ENCODE measurements at regions of chr2 and their contacts with region 1.

Region 1: GRCh38 chr2:58046585-58047372 is at the start of gene VRK2:
- DNase-seq: peak; percentile 93 to 97
- H3K4me3 ChIP-seq: peak within 1 kb of the TSS; percentile 65
- H3K27ac ChIP-seq: peak within 1 kb of the TSS; percentile 81
- H3K4me1 ChIP-seq: peaks cover 41% of the 10 kb centered on the region
- H3K27me3 ChIP-seq: no peaks in the 10 kb centered on the region
- CTCF ChIP-seq: 0 out of 2 replicates have a peak, but pooled peaks have one; percentile 9
- total RNA-seq, gene VRK2: 32.7 and 42.8 TPM in 2 replicates

Region 2: GRCh38 chr2:57740891-57741290 is 305.9 kb before region 1 on chr2:
- CTCF ChIA-PET with region 1: no interaction called
- POLR2A ChIA-PET with region 1: no interaction called
- intact Hi-C with region 1: no loop called
- DNase-seq: no peak
- H3K4me3 ChIP-seq: no peak overlapping the region
- H3K27ac ChIP-seq: no peak overlapping the region
- H3K4me1 ChIP-seq: no peaks in the 10 kb centered on the region
- H3K27me3 ChIP-seq: no peaks in the 10 kb centered on the region
- CTCF ChIP-seq: no peak

Region 3: GRCh38 chr2:57981083-57981768 is 65.6 kb before region 1 on chr2:
- CTCF ChIA-PET with region 1: no interaction called
- POLR2A ChIA-PET with region 1: no interaction called
- intact Hi-C with region 1: loop called (anchors 5 kb)
- DNase-seq: peak in 1 of 2 experiments; percentile 41
- H3K4me3 ChIP-seq: no peak overlapping the region
- H3K27ac ChIP-seq: no peak overlapping the region
- H3K4me1 ChIP-seq: no peaks in the 10 kb centered on the region
- H3K27me3 ChIP-seq: no peaks in the 10 kb centered on the region
- CTCF ChIP-seq: no peak

Region 4: DNA sequence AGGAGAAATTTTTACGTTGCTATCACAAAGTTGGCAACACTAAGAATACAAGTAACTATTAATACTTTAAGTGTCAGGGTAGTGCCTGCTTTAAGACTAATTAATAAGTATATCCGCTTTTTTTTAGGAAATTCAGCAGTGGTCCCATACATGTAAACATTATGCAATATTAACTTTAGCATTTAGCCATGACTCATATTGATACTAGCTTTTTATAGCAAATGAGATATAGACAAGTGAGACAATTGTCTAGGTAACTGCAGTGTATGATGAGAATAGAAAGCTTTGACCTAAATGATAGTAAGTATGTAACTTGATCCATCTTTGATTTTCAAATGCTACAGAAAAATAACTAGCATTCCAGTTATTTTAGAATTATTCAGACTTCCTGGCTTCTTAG is 27.6 kb before region 1 on chr2:
- CTCF ChIA-PET with region 1: no interaction called
- POLR2A ChIA-PET with region 1: no interaction called
- intact Hi-C with region 1: no loop called
- DNase-seq: no peak
- H3K4me3 ChIP-seq: no peak overlapping the region
- H3K27ac ChIP-seq: no peak overlapping the region
- H3K4me1 ChIP-seq: peaks cover 8% of the 10 kb centered on the region; the same call in 1 of the 2 replicates
- H3K27me3 ChIP-seq: no peaks in the 10 kb centered on the region
- CTCF ChIP-seq: no peak

Region 5: DNA sequence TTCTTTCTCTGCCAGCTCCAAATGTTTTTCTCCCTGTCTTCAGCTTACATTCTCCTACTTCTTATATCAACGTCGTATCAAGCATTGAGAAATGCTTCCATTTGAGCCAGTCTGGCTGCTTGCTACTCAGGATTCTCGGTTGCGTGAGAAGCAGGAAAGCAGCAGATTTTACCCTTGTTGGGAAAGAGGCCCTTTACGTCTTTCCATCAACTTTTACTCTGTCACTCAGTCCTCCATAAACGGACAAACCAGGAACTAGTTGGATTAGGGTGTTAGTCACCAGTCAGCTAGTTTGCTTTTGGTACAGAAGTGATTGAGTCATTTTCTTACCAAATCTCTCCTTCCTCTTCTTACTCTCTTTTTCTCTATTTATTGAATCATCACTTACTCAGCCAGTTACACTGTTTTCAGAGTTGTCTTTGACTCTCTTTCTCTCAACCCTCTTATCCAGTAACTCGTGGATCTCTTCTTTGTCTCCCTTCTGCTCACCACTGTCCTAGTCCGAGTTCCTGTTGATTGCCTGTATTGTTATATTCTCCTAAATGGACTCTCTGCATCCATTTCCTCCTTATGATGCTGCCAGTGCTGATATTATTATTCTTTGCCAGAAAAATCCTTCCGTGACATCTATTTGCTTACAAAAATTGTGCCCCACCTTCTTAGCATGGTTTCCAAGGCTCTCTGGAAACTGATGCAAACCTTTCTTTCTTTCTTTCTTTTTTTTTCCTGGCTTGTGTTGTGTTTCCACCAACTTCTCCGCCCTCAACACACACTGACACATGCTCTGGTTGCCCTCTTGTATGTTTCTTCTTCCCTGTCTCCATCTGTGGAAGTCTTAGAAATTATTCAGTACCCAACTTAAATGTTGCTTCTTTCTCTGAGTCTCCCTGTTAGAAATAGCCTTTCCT is 61.3 kb after region 1 on chr2:
- CTCF ChIA-PET with region 1: no interaction called
- POLR2A ChIA-PET with region 1: no interaction called
- intact Hi-C with region 1: loop called (anchors 1 kb)
- DNase-seq: peak; percentile 53 to 98
- H3K4me3 ChIP-seq: peak overlapping the region; percentile 47
- H3K27ac ChIP-seq: peak overlapping the region; percentile 97
- H3K4me1 ChIP-seq: peaks cover 48% of the 10 kb centered on the region
- H3K27me3 ChIP-seq: no peaks in the 10 kb centered on the region
- CTCF ChIP-seq: no peak